ENCODE measurements at regions of chr6 and their contacts with region 1.

Region 1: GRCh38 chr6:107114213-107114905 is 956 bp downstream of the BEND3 start:
- DNase-seq: peak; percentile 89
- H3K4me3 ChIP-seq: peak overlapping the region; percentile 57 to 96 (median 90)
- H3K27ac ChIP-seq: peak overlapping the region; percentile 86 to 92 (median 90)
- H3K4me1 ChIP-seq: peaks cover 5 to 21% (median 14%) of the 10 kb centered on the region in 4 donors
- H3K27me3 ChIP-seq: peaks cover 18% of the 10 kb centered on the region
- CTCF ChIP-seq: peak; percentile 34 to 94 (median 81)
- EP300 ChIP-seq: no peak
- POLR2A ChIP-seq: peak; percentile 21

Region 2: DNA sequence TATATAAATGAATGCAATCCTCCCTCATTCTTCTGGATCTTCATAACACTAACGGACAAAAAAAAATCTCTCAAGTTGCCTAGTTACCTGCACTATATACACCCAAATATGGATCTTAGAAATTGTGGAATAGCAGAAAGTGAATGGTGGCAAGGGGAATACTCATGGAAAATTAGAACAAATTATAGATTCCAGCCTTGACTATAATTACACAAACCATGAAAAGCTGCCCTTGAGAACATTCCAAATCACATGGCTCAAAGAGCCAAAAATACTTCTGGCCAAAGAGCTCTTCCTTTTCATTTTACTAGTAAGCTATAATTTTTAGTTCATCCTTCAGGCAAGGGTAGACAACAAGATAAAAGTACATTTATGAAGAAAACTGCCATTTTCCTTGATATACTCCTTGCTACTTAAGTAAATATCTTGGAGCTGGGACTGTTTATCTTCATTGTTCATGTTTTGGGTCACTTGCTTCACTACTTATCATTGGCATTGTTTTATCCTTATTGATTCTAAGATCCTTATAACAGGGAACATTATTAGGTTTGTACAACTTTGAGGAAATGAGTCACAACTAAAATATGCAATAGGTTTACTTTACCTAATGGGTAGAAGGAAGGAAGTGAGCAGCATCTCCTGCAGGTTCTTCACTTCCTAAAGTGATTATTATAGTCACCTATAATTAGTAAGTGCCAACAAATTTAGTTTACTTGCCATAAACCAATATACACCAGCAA is 92.7 kb before region 1 on chr6:
- in situ Hi-C with region 1: no loop called
- intact Hi-C with region 1: loop called (anchors 10 kb)
- DNase-seq: no peak
- H3K4me3 ChIP-seq: no peak overlapping the region
- H3K27ac ChIP-seq: no peak overlapping the region
- H3K4me1 ChIP-seq: no peaks in the 10 kb centered on the region
- H3K27me3 ChIP-seq: no peaks in the 10 kb centered on the region
- CTCF ChIP-seq: no peak
- EP300 ChIP-seq: no peak
- POLR2A ChIP-seq: no peak

Region 3: GRCh38 chr6:107079436-107079835 is 34.9 kb before region 1 on chr6:
- in situ Hi-C with region 1: no loop called
- intact Hi-C with region 1: loop called (anchors 1 kb)
- DNase-seq: no peak
- H3K4me3 ChIP-seq: no peak overlapping the region
- H3K27ac ChIP-seq: no peak overlapping the region
- H3K4me1 ChIP-seq: peaks cover 0 to 2% (median under 1%) of the 10 kb centered on the region in 4 donors
- H3K27me3 ChIP-seq: no peaks in the 10 kb centered on the region
- CTCF ChIP-seq: no peak
- EP300 ChIP-seq: no peak
- POLR2A ChIP-seq: no peak

Region 4: DNA sequence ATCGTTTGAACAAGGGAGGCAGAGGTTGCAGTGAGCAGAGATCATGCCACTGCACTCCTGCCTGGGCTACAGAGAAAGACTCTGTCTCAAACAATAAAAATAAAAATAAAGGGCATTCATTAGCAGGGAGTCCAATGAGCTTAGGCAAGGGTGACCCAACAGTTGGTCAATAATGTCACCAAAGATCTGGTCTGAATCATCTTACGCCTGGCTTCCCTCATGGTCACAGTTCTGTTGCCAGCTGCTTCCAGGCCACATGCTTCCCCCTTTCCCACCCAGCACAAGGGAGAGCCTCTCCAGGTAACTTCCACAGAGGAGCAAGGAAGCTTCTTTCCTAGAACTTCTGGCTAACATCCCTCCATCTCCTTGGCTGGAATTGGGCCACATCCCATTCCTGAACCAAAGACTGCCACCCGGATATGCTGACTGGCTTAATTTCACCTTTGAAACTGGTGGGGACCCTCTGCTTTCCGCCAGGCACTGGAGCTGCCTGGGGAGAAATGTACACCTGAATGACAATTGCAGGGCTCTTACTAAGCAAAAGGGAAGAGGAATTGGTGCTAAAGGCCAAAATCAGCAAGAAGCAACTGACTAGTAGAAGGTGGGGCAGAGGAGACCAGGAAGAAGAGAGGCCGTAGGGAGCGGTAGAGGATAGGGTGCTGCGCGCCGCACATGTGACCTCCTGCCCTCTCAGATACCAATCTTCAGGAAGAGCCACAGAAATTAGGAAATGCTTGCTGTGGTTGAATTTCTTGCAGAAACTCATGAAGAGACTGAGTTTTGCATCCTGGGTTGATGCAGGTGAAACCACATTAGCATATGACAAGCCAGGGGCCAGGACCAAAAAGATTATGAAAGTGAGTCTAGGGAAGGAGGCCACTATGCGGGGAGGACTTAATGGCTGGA is 718.0 kb after region 1 on chr6:
- in situ Hi-C with region 1: no loop called
- intact Hi-C with region 1: no loop called
- DNase-seq: no peak
- H3K4me3 ChIP-seq: no peak overlapping the region
- H3K27ac ChIP-seq: no peak overlapping the region
- H3K4me1 ChIP-seq: no peaks in the 10 kb centered on the region
- H3K27me3 ChIP-seq: no peaks in the 10 kb centered on the region
- CTCF ChIP-seq: no peak
- EP300 ChIP-seq: no peak
- POLR2A ChIP-seq: no peak

Measured in transverse colon (tissue), 4 donors.